H1 (cell line): ENCODE measurements at regions of chr14 and their contacts with region 1.

Region 1: GRCh38 chr14:74595006-74595735 is 16.9 kb downstream of the LTBP2 start:
- DNase-seq: no peak
- H3K4me3 ChIP-seq: no peak overlapping the region
- H3K27ac ChIP-seq: no peak overlapping the region
- H3K4me1 ChIP-seq: no peaks in the 10 kb centered on the region; a peak in 1 of 7 replicates
- H3K27me3 ChIP-seq: no peaks in the 10 kb centered on the region
- CTCF ChIP-seq: no peak
- EP300 ChIP-seq: no peak
- POLR2A ChIP-seq: no peak
- RAD21 ChIP-seq: no peak

Region 2: GRCh38 chr14:74583689-74584434 is 11.3 kb before region 1 on chr14:
- CTCF ChIA-PET with region 1: interaction called, 10 read pairs
- POLR2A ChIA-PET with region 1: interaction called, 3 read pairs
- DNase-seq: no peak
- H3K4me3 ChIP-seq: no peak overlapping the region
- H3K27ac ChIP-seq: no peak overlapping the region
- H3K4me1 ChIP-seq: 0 out of 7 replicates have a peak, but pooled peaks cover 0 to 2% (median 0%) of the 10 kb centered on the region in 4 experiments
- H3K27me3 ChIP-seq: no peaks in the 10 kb centered on the region
- CTCF ChIP-seq: no peak
- EP300 ChIP-seq: no peak
- POLR2A ChIP-seq: no peak
- RAD21 ChIP-seq: no peak